A549 (cell line): ENCODE measurements at regions of chr3 and their contacts with region 1.

Region 1: DNA sequence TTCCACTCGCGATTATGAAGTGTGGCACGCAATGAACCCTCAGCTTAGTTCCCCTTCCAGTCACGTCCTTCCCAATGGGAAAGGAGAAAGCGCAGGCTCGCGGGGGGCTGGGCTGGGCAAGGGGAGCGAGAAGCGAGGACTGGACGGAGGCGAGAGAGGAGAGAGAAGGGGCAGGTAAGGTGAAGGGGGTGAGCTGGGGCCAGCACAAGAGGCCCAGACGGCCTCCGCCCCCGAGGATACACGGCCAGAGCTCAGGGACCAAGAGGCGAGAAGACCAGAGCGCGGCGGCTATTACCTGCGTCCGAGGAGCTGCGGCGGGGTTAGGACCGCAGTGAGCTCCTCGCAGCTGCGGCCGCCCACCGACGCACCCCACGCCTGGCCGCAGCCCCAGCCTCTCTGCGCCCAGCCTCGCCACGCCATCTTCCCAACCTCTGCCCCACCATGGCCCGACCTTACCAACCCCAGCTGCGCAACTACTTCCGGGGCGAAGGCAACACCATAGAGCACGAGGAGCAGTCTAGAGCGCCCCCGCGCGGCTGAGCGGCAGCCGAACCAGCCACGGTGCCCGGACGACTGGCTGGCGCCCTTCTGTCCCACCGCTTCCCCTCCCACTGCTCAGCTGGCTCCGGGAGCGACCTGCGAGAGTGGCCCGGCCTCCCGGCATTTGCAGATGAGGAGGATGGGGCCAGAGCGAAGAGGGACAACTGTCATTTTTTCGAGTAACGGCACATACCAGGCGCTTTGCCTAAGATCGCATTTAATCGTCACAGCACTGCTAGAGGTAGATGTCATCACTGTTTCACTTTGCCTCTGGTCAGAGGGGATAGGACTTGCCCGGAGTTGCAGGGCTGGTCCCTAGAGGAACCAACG is at the start of gene PARL:
- DNase-seq: peak; percentile 79 to 89
- ATAC-seq: peak; percentile 99 to 100
- H3K4me3 ChIP-seq: peak within 1 kb of the TSS; percentile 79
- H3K27ac ChIP-seq: peak within 1 kb of the TSS; percentile 79 to 94
- H3K4me1 ChIP-seq: peaks cover 15% of the 10 kb centered on the region; the same call in 2 of the 3 replicates
- CTCF ChIP-seq: peak; percentile 78
- EP300 ChIP-seq: no peak
- POLR2A ChIP-seq: peak; percentile 86
- RAD21 ChIP-seq: peak; percentile 38 to 51; a peak in 4 of 5 replicates
- polyA plus RNA-seq, gene PARL: 59.7 and 71.6 TPM in 2 replicates

Region 2: DNA sequence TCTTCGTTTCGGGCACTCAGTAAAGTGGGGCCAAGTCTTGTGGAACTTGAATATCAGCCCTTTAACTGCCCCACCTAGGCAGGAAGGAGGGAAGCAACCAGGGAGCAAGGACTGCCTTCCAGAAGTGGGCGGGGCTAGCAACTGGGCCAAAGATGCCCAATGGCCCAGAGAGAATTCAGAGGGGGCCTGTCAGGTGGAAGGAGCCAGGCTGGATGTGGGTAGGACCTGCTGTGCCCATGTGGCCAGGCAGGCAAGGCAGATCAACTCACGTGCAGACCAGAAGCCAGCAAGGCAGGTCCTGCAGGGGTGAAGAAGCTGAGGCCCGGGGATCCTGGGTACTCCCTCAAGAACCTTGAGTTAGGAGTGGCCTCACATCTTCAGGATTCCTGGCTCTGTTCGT is 64.8 kb before region 1 on chr3:
- CTCF ChIA-PET with region 1: interaction called, 10 read pairs
- POLR2A ChIA-PET with region 1: no interaction called
- DNase-seq: no peak
- ATAC-seq: no peak
- H3K4me3 ChIP-seq: no peak overlapping the region
- H3K27ac ChIP-seq: no peak overlapping the region
- H3K4me1 ChIP-seq: peaks cover 8% of the 10 kb centered on the region; the same call in 2 of the 3 replicates
- CTCF ChIP-seq: no peak
- EP300 ChIP-seq: no peak
- POLR2A ChIP-seq: no peak
- RAD21 ChIP-seq: no peak

Region 3: GRCh38 chr3:183868796-183869195 is 15.9 kb before region 1 on chr3:
- CTCF ChIA-PET with region 1: interaction called, 24 read pairs
- POLR2A ChIA-PET with region 1: no interaction called
- DNase-seq: no peak
- ATAC-seq: no peak
- H3K4me3 ChIP-seq: no peak overlapping the region
- H3K27ac ChIP-seq: no peak overlapping the region
- H3K4me1 ChIP-seq: no peaks in the 10 kb centered on the region
- CTCF ChIP-seq: no peak
- EP300 ChIP-seq: no peak
- POLR2A ChIP-seq: no peak
- RAD21 ChIP-seq: no peak

Region 4: DNA sequence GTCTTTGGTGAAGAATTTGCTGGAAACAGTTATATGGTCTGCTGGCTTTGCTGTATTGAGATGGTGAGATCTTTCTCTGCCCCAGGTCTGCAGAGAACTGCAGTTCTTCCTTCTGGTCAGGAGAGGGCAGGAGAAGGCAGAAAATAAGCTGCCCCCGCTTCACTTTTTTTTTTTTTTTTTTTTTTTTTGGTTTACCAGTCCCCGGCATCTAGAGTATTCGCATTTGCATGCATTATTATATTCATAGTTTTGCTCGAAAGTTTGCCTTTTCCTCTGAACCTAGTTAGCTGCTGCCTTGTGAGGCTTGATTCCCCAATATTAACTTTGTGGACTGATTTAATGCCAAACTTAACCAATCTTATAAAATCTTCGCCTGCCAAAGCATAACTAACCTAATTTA is 10.6 kb after region 1 on chr3:
- CTCF ChIA-PET with region 1: interaction called, 49 read pairs
- POLR2A ChIA-PET with region 1: interaction called, 3 read pairs
- DNase-seq: peak; percentile 46 to 65
- ATAC-seq: peak; percentile 71 to 85; a peak in 5 of 6 replicates
- H3K4me3 ChIP-seq: no peak overlapping the region
- H3K27ac ChIP-seq: no peak overlapping the region
- H3K4me1 ChIP-seq: no peaks in the 10 kb centered on the region
- CTCF ChIP-seq: peak; percentile 68
- EP300 ChIP-seq: no peak
- POLR2A ChIP-seq: no peak
- RAD21 ChIP-seq: peak; percentile 80 to 83

Region 5: DNA sequence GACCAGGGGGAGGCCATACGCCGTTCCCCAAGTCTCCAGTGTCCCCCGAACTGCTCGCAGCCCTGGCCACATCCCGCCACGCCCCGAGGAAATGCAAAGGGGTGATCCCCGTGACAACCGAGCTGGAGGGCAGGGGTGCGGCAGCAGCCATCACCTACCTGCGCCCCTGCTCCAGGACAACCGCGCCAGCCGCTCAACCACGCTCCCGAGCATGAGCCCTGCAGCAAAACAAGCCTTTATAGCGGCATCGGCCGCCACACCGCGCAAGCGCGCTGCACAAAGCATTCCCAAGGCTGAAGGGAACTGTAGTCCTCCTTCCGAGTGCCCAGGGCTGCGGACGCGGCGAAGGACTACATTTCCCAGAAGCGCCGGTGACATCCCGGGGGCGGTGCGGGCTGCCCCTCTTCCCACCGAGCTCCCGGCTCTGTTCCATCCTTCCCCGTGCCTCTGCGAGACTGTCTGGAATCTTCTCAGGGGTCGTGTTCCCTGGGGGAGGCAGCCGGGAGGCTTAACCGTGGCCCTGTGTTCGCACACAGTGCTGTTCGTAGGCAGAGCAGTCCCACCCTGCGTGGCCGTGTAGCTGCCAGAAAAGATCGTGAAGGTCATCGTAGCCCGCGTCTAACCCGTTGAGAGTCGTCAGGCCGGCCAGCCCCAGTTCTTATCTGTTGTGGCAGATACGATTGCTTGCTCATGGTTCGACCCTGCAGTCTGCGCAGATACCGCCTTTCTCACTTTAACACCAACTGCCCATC is 133.2 kb after region 1 on chr3 and contains the start of gene ABCC5:
- CTCF ChIA-PET with region 1: interaction called, 11 read pairs
- POLR2A ChIA-PET with region 1: no interaction called
- DNase-seq: peak; percentile 86
- ATAC-seq: peak; percentile 98 to 99
- H3K4me3 ChIP-seq: peak within 1 kb of the TSS; percentile 93
- H3K27ac ChIP-seq: peak within 1 kb of the TSS; percentile 89 to 98
- H3K4me1 ChIP-seq: peaks cover 9% of the 10 kb centered on the region; the same call in 2 of the 3 replicates
- CTCF ChIP-seq: peak; percentile 23; the same call in 1 of the 3 replicates
- EP300 ChIP-seq: no peak
- POLR2A ChIP-seq: peak; percentile 76
- RAD21 ChIP-seq: 0 out of 5 replicates have a peak, but pooled peaks of 1 of the 2 experiments have one; percentile 7
- polyA plus RNA-seq, gene ABCC5: 19.1 and 20.7 TPM in 2 replicates